AG04449 (cell line): ENCODE measurements at regions of chr7 and their contacts with region 1.

Region 1: GRCh38 chr7:135281363-135281949 is 47.8 kb downstream of the STRA8 start:
- DNase-seq: peak; percentile 45
- H3K4me3 ChIP-seq: no peak overlapping the region
- CTCF ChIP-seq: peak; percentile 94

Region 2: GRCh38 chr7:135260930-135261721 is 20.3 kb before region 1 on chr7:
- CTCF ChIA-PET with region 1: interaction called, 10 read pairs
- POLR2A ChIA-PET with region 1: no interaction called
- DNase-seq: no peak
- H3K4me3 ChIP-seq: no peak overlapping the region
- CTCF ChIP-seq: no peak

Region 3: DNA sequence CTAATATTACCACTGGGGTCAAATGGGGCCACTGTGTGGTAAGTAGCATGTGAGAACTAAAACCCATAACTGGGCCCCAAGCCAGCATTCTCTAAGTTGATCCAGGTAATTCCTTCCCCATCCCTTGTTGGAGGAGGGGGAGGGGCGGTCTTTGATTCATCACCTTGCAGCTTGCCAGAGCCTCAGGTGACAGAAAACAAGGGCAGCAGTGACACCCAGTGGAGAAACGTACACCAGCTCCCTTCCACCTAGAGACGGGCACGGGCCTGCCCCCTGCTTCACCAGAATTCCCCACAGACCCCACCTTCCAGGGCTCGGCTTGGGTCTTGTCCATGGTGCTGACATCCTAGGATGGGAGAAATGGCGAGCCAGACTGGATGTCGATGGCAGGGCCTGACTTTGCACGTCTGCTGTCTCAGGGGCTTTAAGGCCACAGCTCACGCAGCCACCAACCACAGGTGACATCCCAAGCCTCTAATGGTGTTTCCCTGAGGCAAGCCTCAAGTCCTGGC is 54.2 kb after region 1 on chr7:
- CTCF ChIA-PET with region 1: interaction called, 19 read pairs
- POLR2A ChIA-PET with region 1: no interaction called
- DNase-seq: no peak
- H3K4me3 ChIP-seq: no peak overlapping the region
- CTCF ChIP-seq: no peak

Region 4: GRCh38 chr7:135575296-135575695 is 293.8 kb after region 1 on chr7:
- CTCF ChIA-PET with region 1: interaction called, 11 read pairs
- POLR2A ChIA-PET with region 1: no interaction called
- DNase-seq: no peak
- H3K4me3 ChIP-seq: no peak overlapping the region
- CTCF ChIP-seq: no peak

Region 5: DNA sequence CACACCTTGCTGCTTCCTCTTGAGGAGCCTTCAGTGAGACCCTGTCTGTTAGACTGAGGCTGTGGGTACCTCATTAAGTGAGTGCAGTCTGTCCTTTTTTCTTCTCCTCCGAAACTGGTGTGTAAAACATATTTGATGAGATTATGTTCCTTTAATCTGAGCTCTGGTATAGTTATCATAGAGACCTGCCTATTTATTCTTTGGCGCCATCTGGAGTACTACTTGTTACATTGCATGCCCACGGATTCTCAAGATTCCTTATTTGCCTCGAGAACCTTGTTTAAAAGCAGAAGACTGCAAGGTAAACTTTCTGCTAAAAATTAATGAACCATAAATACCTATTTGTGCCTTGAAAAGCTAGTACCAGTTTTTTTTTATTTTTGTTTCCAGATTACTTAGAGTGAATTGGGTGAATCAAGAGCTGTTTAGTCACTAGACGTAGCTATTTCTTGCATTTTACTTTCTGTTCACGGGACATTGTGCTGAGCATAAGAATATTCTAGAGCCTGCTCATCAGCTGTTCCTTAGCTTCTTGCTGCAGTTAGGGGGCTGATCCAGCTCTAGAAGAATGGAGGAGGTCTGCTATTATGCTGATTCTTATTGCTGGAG is 363.9 kb after region 1 on chr7:
- CTCF ChIA-PET with region 1: interaction called, 346 read pairs
- POLR2A ChIA-PET with region 1: no interaction called
- DNase-seq: no peak
- H3K4me3 ChIP-seq: no peak overlapping the region
- CTCF ChIP-seq: peak; percentile 52